ENCODE measurements at regions of chr3 and their contacts with region 1.

Region 1: GRCh38 chr3:146189519-146190173 is 28.7 kb upstream of the PLOD2 start:
- DNase-seq: peak in 2 of 5 donors; percentile 4 to 20
- H3K4me3 ChIP-seq: no peak overlapping the region
- H3K4me3 Mint-ChIP-seq: no peak overlapping the region
- H3K27ac ChIP-seq: no peak overlapping the region
- H3K27ac Mint-ChIP-seq: no peak overlapping the region
- H3K4me1 ChIP-seq: no peaks in the 10 kb centered on the region
- H3K4me1 Mint-ChIP-seq: peaks cover 0 to 3% (median 0%) of the 10 kb centered on the region in 3 donors
- H3K27me3 ChIP-seq: no peaks in the 10 kb centered on the region
- H3K27me3 Mint-ChIP-seq: peaks cover 0 to 11% of the 10 kb centered on the region in 2 donors

Region 2: GRCh38 chr3:146577662-146578061 is 388.0 kb after region 1 on chr3:
- CTCF ChIA-PET with region 1: interaction called, 12 read pairs
- POLR2A ChIA-PET with region 1: no interaction called
- DNase-seq: peak in 4 of 5 donors; percentile 2 to 48 (median 32)
- H3K4me3 ChIP-seq: no peak overlapping the region
- H3K4me3 Mint-ChIP-seq: no peak overlapping the region
- H3K27ac ChIP-seq: no peak overlapping the region
- H3K27ac Mint-ChIP-seq: no peak overlapping the region
- H3K4me1 ChIP-seq: no peaks in the 10 kb centered on the region
- H3K4me1 Mint-ChIP-seq: no peaks in the 10 kb centered on the region
- H3K27me3 ChIP-seq: no peaks in the 10 kb centered on the region
- H3K27me3 Mint-ChIP-seq: peaks cover 4% of the 10 kb centered on the region in 2 donors